Dendritic cell treated with granulocyte-macrophage colony-stimulating factor and Interleukin-4, amounts not matched to agents 40 ng/mL and 50 ng/mL, for 4 days (primary cell): ENCODE measurements at regions of chr3 and their contacts with region 1.

Region 1: GRCh38 chr3:128095222-128095703 is 28.3 kb downstream of the RUVBL1 start:
- H3K4me3 Mint-ChIP-seq: no peak overlapping the region
- H3K27ac Mint-ChIP-seq: no peak overlapping the region
- H3K4me1 Mint-ChIP-seq: no peaks in the 10 kb centered on the region
- H3K27me3 Mint-ChIP-seq: no peaks in the 10 kb centered on the region

Region 2: GRCh38 chr3:127672516-127673190 is 422.6 kb before region 1 on chr3 and contains the start of gene ABTB1:
- intact Hi-C with region 1: no loop called
- H3K4me3 Mint-ChIP-seq: peak within 1 kb of the TSS; percentile 81
- H3K27ac Mint-ChIP-seq: peak within 1 kb of the TSS; percentile 89
- H3K4me1 Mint-ChIP-seq: peaks cover 56% of the 10 kb centered on the region
- H3K27me3 Mint-ChIP-seq: no peaks in the 10 kb centered on the region

Region 3: GRCh38 chr3:128041344-128041743 is 53.9 kb before region 1 on chr3:
- intact Hi-C with region 1: no loop called
- H3K4me3 Mint-ChIP-seq: no peak overlapping the region
- H3K27ac Mint-ChIP-seq: no peak overlapping the region
- H3K4me1 Mint-ChIP-seq: no peaks in the 10 kb centered on the region
- H3K27me3 Mint-ChIP-seq: peaks cover 33% of the 10 kb centered on the region

Region 4: DNA sequence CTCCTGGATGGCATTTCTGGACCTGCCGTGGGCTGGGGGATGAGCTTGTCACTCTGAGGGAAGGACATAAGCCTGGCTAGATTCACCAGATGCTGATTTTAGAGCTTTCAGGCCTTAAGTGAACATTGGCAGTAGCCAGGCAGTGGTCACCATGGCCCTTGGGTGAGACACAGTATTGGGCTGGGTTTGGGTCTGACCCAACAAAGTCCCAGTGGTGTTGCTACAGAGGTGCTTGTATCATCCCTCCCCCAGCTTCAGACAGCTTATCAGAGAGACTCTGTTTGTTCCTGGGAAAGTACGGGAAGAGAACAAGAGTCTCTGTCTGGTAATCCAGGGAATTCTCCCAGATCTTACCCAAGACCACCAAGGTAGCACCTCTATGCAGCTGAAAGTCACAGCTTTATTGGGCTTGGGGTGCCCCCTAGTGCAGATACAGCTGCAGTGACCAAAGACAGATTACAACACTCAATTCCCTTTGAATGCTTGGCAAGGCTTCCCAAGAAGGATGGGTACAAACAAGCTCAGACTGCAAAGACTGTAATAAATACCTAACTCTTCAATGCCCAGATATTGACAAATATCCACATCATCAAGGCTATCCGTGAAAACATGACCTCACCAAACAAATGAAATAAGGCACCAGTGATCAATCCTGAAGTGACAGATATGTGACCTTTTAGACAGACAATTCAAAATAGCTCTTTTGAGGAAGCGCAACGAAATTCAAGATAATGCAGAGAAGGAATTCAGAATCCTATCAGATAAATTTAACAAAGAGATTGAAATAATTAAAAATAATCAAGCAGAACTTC is 38.2 kb after region 1 on chr3:
- intact Hi-C with region 1: loop called (anchors 1 kb)
- H3K4me3 Mint-ChIP-seq: no peak overlapping the region
- H3K27ac Mint-ChIP-seq: no peak overlapping the region
- H3K4me1 Mint-ChIP-seq: peaks cover 15% of the 10 kb centered on the region
- H3K27me3 Mint-ChIP-seq: peaks cover 7% of the 10 kb centered on the region

Region 5: GRCh38 chr3:128322066-128323022 is 227.1 kb after region 1 on chr3:
- intact Hi-C with region 1: loop called (anchors 10 kb)
- H3K4me3 Mint-ChIP-seq: no peak overlapping the region
- H3K27ac Mint-ChIP-seq: no peak overlapping the region
- H3K4me1 Mint-ChIP-seq: peaks cover 19% of the 10 kb centered on the region
- H3K27me3 Mint-ChIP-seq: no peaks in the 10 kb centered on the region

Region 6: DNA sequence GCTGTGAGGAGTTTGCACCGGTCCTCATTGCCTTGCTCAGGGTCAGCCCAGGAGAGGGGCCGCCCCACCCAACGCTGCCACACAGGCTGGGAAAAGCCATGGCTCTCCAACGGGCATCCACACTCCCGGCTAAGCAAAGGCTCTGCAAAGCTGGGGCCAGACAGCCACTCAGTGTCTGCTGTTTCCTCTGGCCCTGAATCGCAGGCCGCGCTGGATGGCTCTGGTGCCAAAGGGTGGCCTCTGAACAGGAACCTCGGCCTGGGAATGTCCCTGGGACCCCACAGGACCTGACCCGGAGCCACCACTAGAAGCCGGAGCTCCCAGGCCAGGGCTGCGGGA is 512.4 kb after region 1 on chr3:
- intact Hi-C with region 1: loop called (anchors 10 kb)
- H3K4me3 Mint-ChIP-seq: peak overlapping the region; percentile 75
- H3K27ac Mint-ChIP-seq: no peak overlapping the region
- H3K4me1 Mint-ChIP-seq: peaks cover 23% of the 10 kb centered on the region
- H3K27me3 Mint-ChIP-seq: peaks cover 7% of the 10 kb centered on the region